H1 (cell line): ENCODE measurements at regions of chr13 and their contacts with region 1.

Region 1: DNA sequence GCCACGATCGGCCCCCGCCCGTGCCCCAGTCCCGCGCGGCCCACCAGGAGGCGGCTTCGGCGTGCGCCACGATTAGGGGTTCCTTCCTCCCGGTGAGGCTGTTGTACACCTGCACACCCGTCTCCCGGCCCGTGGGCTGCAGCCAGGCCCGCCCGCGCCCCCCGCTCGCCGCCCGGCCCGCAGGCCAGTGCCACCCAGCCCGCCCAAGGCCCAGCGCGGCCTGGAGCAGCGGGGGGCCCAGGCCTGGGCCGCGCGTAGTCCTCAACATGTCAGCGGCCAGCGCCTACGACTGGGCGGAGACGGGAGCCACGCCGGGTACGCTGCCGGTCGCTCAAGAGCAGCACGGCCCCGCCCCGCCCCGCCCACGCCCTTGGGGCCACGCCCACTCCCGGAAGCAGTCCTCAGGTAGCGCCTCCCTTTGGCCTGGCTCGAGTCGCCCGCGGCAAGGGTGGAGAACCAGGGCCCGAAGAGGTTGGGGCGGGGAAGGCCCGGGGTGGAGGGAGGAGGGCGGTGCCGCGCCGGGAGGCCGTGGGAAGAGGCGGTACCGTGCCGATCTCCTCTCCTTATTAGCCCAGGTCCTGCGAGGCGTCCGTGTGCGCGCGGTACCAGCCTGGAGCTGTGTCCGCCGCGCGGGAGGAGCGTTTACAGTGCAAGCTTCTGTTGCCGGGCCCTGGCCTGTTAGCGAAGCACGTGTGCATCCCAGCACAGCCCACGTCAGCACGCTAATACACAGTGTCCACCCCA is at the start of gene CARS2:
- DNase-seq: peak; percentile 87 to 91
- H3K4me3 ChIP-seq: peak within 1 kb of the TSS; percentile 66 to 96 (median 80)
- H3K27ac ChIP-seq: peak within 1 kb of the TSS; percentile 71
- H3K4me1 ChIP-seq: peaks cover 0 to 14% (median 6%) of the 10 kb centered on the region in 4 experiments; a peak in 4 of 7 replicates
- H3K27me3 ChIP-seq: no peaks in the 10 kb centered on the region
- CTCF ChIP-seq: peak in 1 of 3 experiments; percentile 6; a peak in 1 of 4 replicates
- EP300 ChIP-seq: no peak
- POLR2A ChIP-seq: peak in 1 of 2 experiments; percentile 35; a peak in 2 of 3 replicates
- RAD21 ChIP-seq: no peak
- total RNA-seq, gene CARS2: 44.5 and 55.9 TPM in 2 replicates

Region 2: GRCh38 chr13:110690516-110690915 is 15.5 kb before region 1 on chr13:
- CTCF ChIA-PET with region 1: interaction called, 11 read pairs
- POLR2A ChIA-PET with region 1: interaction called, 43 read pairs
- DNase-seq: no peak
- H3K4me3 ChIP-seq: no peak overlapping the region
- H3K27ac ChIP-seq: no peak overlapping the region
- H3K4me1 ChIP-seq: no peaks in the 10 kb centered on the region
- H3K27me3 ChIP-seq: no peaks in the 10 kb centered on the region
- CTCF ChIP-seq: no peak
- EP300 ChIP-seq: no peak
- POLR2A ChIP-seq: no peak
- RAD21 ChIP-seq: no peak

Region 3: GRCh38 chr13:110925023-110925612 is 219.1 kb after region 1 on chr13:
- CTCF ChIA-PET with region 1: no interaction called
- POLR2A ChIA-PET with region 1: no interaction called
- DNase-seq: peak in 1 of 2 experiments; percentile 49
- H3K4me3 ChIP-seq: no peak overlapping the region
- H3K27ac ChIP-seq: no peak overlapping the region
- H3K4me1 ChIP-seq: peaks cover 0 to 8% (median 2%) of the 10 kb centered on the region in 4 experiments; a peak in 2 of 7 replicates
- H3K27me3 ChIP-seq: no peaks in the 10 kb centered on the region
- CTCF ChIP-seq: peak; percentile 33 to 70 (median 61)
- EP300 ChIP-seq: no peak
- POLR2A ChIP-seq: no peak
- RAD21 ChIP-seq: peak; percentile 74 to 77